Activated CD4-positive, alpha-beta memory T cell treated with anti-CD3 and anti-CD28 coated beads for 36 hours (primary cell): ENCODE measurements at regions of chr1 and their contacts with region 1.

Region 1: DNA sequence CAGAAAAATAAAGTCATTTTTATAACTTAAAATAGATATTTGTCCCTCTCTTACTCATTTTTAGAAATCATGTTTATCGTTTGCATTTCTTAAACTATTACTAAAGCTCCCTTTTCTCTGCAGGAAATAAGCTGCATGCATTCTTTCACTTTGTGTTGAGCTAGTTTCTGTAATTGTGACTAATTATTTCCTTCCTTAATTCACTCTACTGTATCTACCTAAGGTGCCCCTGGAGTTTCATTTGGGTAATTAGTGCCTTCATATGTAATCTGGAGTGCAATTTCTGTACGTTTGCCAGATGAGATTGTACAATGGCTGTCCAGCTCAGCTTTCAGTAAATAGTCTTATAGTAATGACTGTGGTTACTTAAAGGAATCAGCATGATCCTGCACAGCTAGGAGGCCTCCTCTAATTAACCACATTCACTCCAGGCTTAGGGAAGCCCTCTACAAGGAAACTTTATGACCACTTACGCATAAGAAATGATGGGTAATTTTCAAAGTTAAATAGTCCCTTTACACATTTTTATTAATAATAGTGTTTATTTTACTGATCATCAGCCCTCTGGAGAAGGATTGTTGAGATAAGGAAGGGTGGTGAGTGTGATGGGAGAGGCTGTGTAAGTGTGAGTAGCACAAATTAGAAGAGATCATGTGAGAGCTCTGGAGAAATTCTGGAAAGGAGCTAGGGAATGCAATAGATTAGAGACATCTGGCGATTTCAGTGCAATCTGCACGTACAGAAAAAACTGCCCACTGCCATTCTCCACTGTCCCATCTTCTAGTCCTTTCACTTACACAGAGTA is 86.8 kb downstream of the LRRC8C start:
- DNase-seq: no peak
- H3K4me3 Mint-ChIP-seq: no peak overlapping the region
- H3K27ac Mint-ChIP-seq: peak overlapping the region; percentile 97
- H3K4me1 Mint-ChIP-seq: peaks cover 92% of the 10 kb centered on the region
- H3K27me3 Mint-ChIP-seq: no peaks in the 10 kb centered on the region

Region 2: GRCh38 chr1:89524369-89525168 is 195.1 kb before region 1 on chr1 and contains the start of gene LRRC8B:
- CTCF ChIA-PET with region 1: no interaction called
- POLR2A ChIA-PET with region 1: interaction called, 5 read pairs
- intact Hi-C with region 1: loop called (anchors 1 kb)
- DNase-seq: peak; percentile 93
- H3K4me3 Mint-ChIP-seq: no peak within 1 kb of the TSS
- H3K27ac Mint-ChIP-seq: no peak within 1 kb of the TSS
- H3K4me1 Mint-ChIP-seq: peaks cover 31% of the 10 kb centered on the region
- H3K27me3 Mint-ChIP-seq: no peaks in the 10 kb centered on the region
- total RNA-seq, gene LRRC8B: 41.1 to 42.1 TPM

Region 3: GRCh38 chr1:89632657-89633247 is 87.0 kb before region 1 on chr1 and contains the start of gene LRRC8C:
- CTCF ChIA-PET with region 1: interaction called, 12 read pairs
- POLR2A ChIA-PET with region 1: interaction called, 40 read pairs
- intact Hi-C with region 1: loop called (anchors 1 kb)
- DNase-seq: peak; percentile 90
- H3K4me3 Mint-ChIP-seq: peak within 1 kb of the TSS; percentile 93
- H3K27ac Mint-ChIP-seq: peak within 1 kb of the TSS; percentile 95
- H3K4me1 Mint-ChIP-seq: peaks cover 68% of the 10 kb centered on the region
- H3K27me3 Mint-ChIP-seq: no peaks in the 10 kb centered on the region
- total RNA-seq, gene LRRC8C: 36.4 to 40.4 TPM

Region 4: GRCh38 chr1:89675677-89676076 is 44.0 kb before region 1 on chr1:
- CTCF ChIA-PET with region 1: interaction called, 9 read pairs
- POLR2A ChIA-PET with region 1: interaction called, 10 read pairs
- intact Hi-C with region 1: loop called (anchors 1 kb)
- DNase-seq: no peak
- H3K4me3 Mint-ChIP-seq: no peak overlapping the region
- H3K27ac Mint-ChIP-seq: peak overlapping the region; percentile 83
- H3K4me1 Mint-ChIP-seq: peaks cover 86% of the 10 kb centered on the region
- H3K27me3 Mint-ChIP-seq: no peaks in the 10 kb centered on the region

Region 5: GRCh38 chr1:89698624-89699023 is 21.1 kb before region 1 on chr1:
- CTCF ChIA-PET with region 1: interaction called, 6 read pairs
- POLR2A ChIA-PET with region 1: interaction called, 6 read pairs
- intact Hi-C with region 1: loop called (anchors 1 kb)
- DNase-seq: no peak
- H3K4me3 Mint-ChIP-seq: no peak overlapping the region
- H3K27ac Mint-ChIP-seq: peak overlapping the region; percentile 77
- H3K4me1 Mint-ChIP-seq: peaks cover 90% of the 10 kb centered on the region
- H3K27me3 Mint-ChIP-seq: no peaks in the 10 kb centered on the region

Region 6: GRCh38 chr1:89855413-89856123 is 135.9 kb after region 1 on chr1:
- CTCF ChIA-PET with region 1: no interaction called
- POLR2A ChIA-PET with region 1: no interaction called
- intact Hi-C with region 1: loop called (anchors 2 kb)
- DNase-seq: no peak
- H3K4me3 Mint-ChIP-seq: no peak overlapping the region
- H3K27ac Mint-ChIP-seq: no peak overlapping the region
- H3K4me1 Mint-ChIP-seq: peaks cover 18% of the 10 kb centered on the region
- H3K27me3 Mint-ChIP-seq: no peaks in the 10 kb centered on the region